Vagina (tissue), 2 donors: ENCODE measurements at regions of chr1 and their contacts with region 1.

Region 1: DNA sequence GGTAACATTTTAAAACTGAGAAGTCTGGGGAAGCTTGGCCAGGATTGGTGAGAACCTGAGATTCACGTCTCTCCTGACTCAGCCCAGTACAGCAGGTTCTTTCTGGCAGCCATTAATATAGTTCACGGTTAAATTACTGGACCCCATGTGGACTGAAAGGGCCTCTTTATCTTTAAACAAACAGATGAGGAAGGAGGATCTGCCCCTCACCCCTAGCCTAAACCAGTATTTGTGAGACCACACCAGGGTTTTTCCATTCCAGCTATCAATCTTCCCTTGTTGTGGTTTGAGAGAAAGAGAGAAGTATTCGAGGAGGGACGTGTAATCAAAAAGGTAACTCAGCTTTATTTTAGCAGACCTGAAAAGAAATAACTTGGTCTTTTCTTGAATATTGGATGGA is 137.1 kb downstream of the PROX1 start:
- DNase-seq: no peak
- H3K4me3 ChIP-seq: no peak overlapping the region
- H3K27ac ChIP-seq: no peak overlapping the region
- H3K4me1 ChIP-seq: no peaks in the 10 kb centered on the region
- H3K27me3 ChIP-seq: no peaks in the 10 kb centered on the region
- CTCF ChIP-seq: no peak
- POLR2A ChIP-seq: no peak

Region 2: DNA sequence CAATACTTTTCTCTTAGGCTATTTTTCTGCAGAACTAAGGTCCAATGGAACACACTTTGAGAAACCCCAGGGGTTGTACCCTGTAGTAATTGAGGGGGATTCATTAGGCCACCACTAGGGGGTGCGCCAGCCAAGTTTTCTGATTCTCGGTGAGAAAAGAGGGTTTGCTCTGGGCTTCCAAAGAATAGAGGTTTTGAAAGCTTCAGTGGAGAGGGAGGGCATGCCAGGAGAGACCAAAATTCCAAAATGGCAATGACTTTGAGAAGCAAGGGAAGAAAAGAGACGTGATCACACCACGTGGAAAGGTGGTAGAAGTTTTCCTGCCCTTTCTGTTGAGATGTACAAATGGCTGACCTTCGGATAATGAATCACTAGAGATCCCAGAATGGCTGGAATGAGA is 750.5 kb before region 1 on chr1:
- intact Hi-C with region 1: loop called (anchors 2 kb)
- DNase-seq: no peak
- H3K4me3 ChIP-seq: no peak overlapping the region
- H3K27ac ChIP-seq: no peak overlapping the region
- H3K4me1 ChIP-seq: no peaks in the 10 kb centered on the region
- H3K27me3 ChIP-seq: no peaks in the 10 kb centered on the region
- CTCF ChIP-seq: no peak
- POLR2A ChIP-seq: no peak

Region 3: DNA sequence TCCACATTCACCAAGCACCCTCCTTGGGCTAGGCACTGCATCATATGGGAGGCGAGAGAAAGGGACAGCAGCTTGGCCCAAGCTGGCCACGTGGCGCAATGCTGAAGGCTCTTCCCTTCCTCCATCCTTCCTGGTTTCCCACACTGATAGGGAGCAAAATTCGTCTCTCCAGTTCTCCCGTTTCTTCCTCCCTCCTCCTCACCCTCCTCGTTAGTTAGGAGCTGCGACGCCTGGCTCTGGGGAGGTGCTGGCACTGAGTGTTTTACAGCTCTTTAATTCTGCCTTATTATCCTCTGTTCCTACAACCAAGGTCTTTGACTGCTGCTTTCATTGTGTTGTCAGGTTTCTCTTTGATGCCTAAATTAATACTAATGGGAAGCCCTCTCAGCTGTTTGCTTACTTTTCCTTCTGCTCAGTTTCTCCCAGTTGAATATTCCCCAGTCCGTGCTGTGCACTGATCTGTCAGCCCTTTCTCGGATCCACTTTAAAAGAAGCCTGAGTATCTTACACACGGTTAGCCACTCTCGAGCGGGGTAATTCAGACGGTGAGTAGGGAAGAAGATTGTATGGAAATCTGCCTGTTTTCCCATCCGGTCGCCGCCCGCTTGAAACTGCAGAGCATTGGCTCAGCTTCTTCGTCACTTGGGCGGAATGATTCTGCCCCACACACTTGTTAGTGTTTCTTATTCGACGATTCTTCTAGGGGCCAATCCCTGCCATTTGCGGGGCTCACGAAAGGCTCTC is 99.9 kb after region 1 on chr1:
- intact Hi-C with region 1: no loop called
- DNase-seq: no peak
- H3K4me3 ChIP-seq: peak overlapping the region; percentile 32 to 37
- H3K27ac ChIP-seq: no peak overlapping the region
- H3K4me1 ChIP-seq: peaks cover 10% of the 10 kb centered on the region
- H3K27me3 ChIP-seq: no peaks in the 10 kb centered on the region
- CTCF ChIP-seq: no peak
- POLR2A ChIP-seq: no peak

Region 4: GRCh38 chr1:214289574-214290272 is 164.8 kb after region 1 on chr1:
- intact Hi-C with region 1: no loop called
- DNase-seq: no peak
- H3K4me3 ChIP-seq: no peak overlapping the region
- H3K27ac ChIP-seq: no peak overlapping the region
- H3K4me1 ChIP-seq: peaks cover 5% of the 10 kb centered on the region
- H3K27me3 ChIP-seq: no peaks in the 10 kb centered on the region
- CTCF ChIP-seq: no peak
- POLR2A ChIP-seq: no peak